B cell (primary cell): ENCODE measurements at regions of chr22 and their contacts with region 1.

Region 1: GRCh38 chr22:36377022-36377631 is 10.6 kb downstream of the MYH9 start:
- DNase-seq: peak; percentile 71
- ATAC-seq: peak; percentile 71
- H3K4me3 ChIP-seq: peak overlapping the region in 4 of 5 experiments; percentile 7 to 59 (median 38)
- H3K4me3 Mint-ChIP-seq: peak overlapping the region; percentile 70
- H3K27ac ChIP-seq: peak overlapping the region; percentile 88 to 90
- H3K27ac Mint-ChIP-seq: peak overlapping the region; percentile 88
- H3K4me1 ChIP-seq: peaks cover 98 to 99% of the 10 kb centered on the region in 2 donors
- H3K4me1 Mint-ChIP-seq: peaks cover 86% of the 10 kb centered on the region
- H3K27me3 ChIP-seq: no peaks in the 10 kb centered on the region
- H3K27me3 Mint-ChIP-seq: no peaks in the 10 kb centered on the region
- CTCF ChIP-seq: no peak

Region 2: GRCh38 chr22:36221799-36222751 is 155.1 kb before region 1 on chr22:
- CTCF ChIA-PET with region 1: no interaction called
- POLR2A ChIA-PET with region 1: no interaction called
- intact Hi-C with region 1: no loop called
- DNase-seq: peak; percentile 60
- ATAC-seq: peak; percentile 70
- H3K4me3 ChIP-seq: no peak overlapping the region
- H3K4me3 Mint-ChIP-seq: peak overlapping the region; percentile 46
- H3K27ac ChIP-seq: no peak overlapping the region
- H3K27ac Mint-ChIP-seq: no peak overlapping the region
- H3K4me1 ChIP-seq: no peaks in the 10 kb centered on the region
- H3K4me1 Mint-ChIP-seq: peaks cover 5% of the 10 kb centered on the region
- H3K27me3 ChIP-seq: peaks cover 0 to 4% (median 0%) of the 10 kb centered on the region in 4 experiments
- H3K27me3 Mint-ChIP-seq: peaks cover 19% of the 10 kb centered on the region
- CTCF ChIP-seq: peak; percentile 65

Region 3: DNA sequence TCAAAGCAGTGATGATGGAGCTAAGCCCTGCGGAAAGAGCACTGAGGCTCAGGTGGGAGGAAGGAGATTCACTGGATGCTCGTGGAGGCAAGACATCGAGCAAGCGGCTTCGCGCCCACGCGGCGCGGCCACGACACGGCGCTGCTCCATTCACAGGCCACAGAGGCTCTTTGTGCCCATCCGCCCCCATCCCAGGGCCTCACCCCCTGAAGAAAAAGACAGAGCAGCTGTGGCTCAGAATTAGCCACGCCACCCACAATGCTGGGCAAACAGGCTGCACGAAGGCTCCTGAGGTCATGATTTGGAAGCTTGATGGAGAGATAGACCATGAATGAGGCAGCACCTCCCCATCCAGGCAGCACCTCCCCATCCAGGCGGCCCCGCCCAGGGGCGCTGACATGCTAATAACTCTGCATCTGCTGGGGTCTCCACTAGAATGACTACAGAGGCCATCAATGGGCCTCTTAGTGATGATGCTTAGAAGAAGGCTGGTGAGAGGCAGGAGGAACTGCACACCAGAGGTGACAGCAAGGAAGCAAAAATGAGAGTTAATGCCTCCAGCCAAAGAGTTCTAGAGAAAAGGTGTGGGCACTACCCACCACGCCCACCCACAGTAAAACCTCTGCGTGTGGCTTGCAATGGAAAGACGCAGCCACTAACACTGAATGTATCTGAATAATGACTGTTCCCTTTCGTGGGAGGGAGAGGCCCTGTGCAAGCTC is 32.9 kb before region 1 on chr22:
- CTCF ChIA-PET with region 1: interaction called, 3 read pairs
- POLR2A ChIA-PET with region 1: interaction called, 10 read pairs
- intact Hi-C with region 1: no loop called
- DNase-seq: no peak
- ATAC-seq: no peak
- H3K4me3 ChIP-seq: no peak overlapping the region
- H3K4me3 Mint-ChIP-seq: no peak overlapping the region
- H3K27ac ChIP-seq: peak overlapping the region in 1 of 2 donors; percentile 18
- H3K27ac Mint-ChIP-seq: peak overlapping the region; percentile 84
- H3K4me1 ChIP-seq: peaks cover 0 to 11% of the 10 kb centered on the region in 2 donors
- H3K4me1 Mint-ChIP-seq: peaks cover 33% of the 10 kb centered on the region
- H3K27me3 ChIP-seq: no peaks in the 10 kb centered on the region
- H3K27me3 Mint-ChIP-seq: no peaks in the 10 kb centered on the region
- CTCF ChIP-seq: no peak

Region 4: DNA sequence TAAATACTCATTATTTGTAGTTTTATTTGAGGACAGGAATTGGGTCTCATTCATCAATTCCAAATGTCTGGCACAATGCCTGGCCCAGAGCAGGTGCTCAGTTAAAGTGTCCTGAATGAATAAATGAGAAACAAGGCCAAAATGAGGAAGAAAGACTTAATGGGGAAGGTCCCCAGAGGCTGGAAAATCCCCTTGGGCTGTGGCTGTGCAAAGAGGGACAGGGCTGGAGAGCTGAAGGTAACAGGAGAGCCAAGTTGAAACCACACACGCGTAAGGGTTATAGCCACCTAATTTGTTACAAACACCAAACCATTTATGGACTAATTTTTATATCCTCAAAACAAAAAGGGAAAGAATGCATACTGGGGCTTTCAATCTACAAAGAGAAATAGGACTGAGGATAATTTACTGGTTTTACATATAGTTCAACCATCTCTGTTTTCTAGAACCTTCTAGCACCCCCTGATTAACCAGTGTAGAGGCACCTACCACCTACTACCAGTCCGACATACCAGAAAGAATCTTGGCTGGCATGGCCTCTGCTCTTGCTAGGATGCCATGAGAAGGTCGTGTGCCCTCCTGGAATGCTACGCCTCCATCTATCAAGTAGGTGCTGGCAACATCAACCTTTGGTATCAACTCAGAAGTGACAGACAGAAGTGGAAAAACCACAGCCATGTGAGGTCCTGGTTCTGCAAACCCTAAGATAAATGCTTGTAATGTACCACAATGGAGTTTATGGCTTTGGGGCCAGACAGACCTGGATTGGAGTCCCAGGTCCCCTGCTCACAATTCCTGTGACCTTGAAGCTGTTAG is 17.7 kb before region 1 on chr22:
- CTCF ChIA-PET with region 1: interaction called, 9 read pairs
- POLR2A ChIA-PET with region 1: interaction called, 8 read pairs
- intact Hi-C with region 1: loop called (anchors 2 kb)
- DNase-seq: peak; percentile 84
- ATAC-seq: peak; percentile 79
- H3K4me3 ChIP-seq: peak overlapping the region in 1 of 5 experiments; percentile 18
- H3K4me3 Mint-ChIP-seq: peak overlapping the region; percentile 74
- H3K27ac ChIP-seq: peak overlapping the region; percentile 56 to 92
- H3K27ac Mint-ChIP-seq: peak overlapping the region; percentile 81
- H3K4me1 ChIP-seq: peaks cover 95 to 98% of the 10 kb centered on the region in 2 donors
- H3K4me1 Mint-ChIP-seq: peaks cover 93% of the 10 kb centered on the region
- H3K27me3 ChIP-seq: no peaks in the 10 kb centered on the region
- H3K27me3 Mint-ChIP-seq: no peaks in the 10 kb centered on the region
- CTCF ChIP-seq: no peak